ENCODE measurements at regions of chr5 and their contacts with region 1.

Region 1: GRCh38 chr5:108642167-108642906 is 105.4 kb upstream of the FER start:
- DNase-seq: no peak
- H3K4me3 ChIP-seq: no peak overlapping the region
- H3K27me3 ChIP-seq: no peaks in the 10 kb centered on the region
- CTCF ChIP-seq: peak; percentile 92

Region 2: DNA sequence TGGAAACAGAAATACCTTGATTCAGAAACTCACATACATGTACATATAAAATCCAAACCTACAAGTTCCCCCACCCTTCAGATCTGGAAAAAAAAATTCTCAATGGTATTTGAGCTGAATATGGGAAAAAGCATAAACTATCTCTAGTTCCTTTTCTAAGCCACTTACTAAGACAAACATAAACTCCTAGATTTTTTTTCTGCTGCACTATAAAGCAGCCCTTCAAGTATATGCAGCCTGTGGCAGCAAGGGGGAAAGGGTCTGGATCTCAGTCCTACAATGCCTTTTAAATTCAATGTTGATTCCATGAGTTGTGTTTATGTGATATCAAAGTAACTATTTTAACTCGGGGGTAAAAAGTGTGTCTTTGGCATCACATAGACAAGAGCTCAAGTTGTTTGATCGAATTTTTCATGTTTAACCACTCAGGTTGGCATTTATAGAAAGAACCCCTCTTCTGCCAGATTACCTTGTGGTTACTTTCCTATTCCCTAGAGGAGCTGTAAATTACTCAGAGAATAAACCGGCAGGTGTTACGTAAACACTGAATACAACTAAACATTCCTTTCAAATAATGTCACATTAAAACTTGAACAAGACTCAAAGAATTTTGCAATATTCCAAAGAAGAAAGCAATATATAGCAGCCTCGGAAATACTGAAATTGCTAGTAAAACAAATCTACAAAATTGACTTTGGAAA is 13.6 kb after region 1 on chr5:
- CTCF ChIA-PET with region 1: interaction called, 16 read pairs
- POLR2A ChIA-PET with region 1: no interaction called
- DNase-seq: peak; percentile 22
- H3K4me3 ChIP-seq: no peak overlapping the region
- H3K27me3 ChIP-seq: no peaks in the 10 kb centered on the region
- CTCF ChIP-seq: no peak

Region 3: DNA sequence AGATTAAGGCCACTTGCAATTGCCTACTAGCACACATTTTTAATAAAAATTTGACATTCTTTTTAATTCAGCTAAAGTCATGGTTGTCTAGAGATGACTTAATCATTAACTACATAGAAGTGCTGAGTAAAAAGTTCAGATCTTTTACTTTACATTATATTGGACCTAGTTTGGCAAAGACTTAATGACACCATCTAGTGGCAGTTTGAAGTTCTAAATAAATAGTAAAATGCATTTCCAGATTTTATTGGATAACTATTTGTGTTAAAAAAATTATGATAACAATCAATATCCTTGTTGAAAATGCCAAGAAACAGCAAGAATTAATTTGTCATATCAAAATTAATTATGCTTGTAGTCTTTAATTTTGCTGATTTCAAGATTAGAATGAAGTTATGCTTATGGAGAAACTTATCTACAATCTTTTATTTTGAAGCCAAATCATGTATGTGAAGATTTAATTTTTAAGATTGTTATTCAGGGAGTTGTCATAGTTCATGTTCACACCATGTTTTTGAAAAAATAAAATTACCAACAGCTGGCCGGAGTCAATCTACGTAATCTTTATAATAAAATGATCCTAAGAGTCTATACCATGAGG is 837.0 kb after region 1 on chr5:
- CTCF ChIA-PET with region 1: interaction called, 15 read pairs
- POLR2A ChIA-PET with region 1: no interaction called
- DNase-seq: no peak
- H3K4me3 ChIP-seq: no peak overlapping the region
- H3K27me3 ChIP-seq: no peaks in the 10 kb centered on the region
- CTCF ChIP-seq: peak; percentile 48